ENCODE measurements at regions of chr11 and their contacts with region 1.

Region 1: GRCh38 chr11:75802913-75803820 is 11.8 kb upstream of the UVRAG start:
- DNase-seq: peak; percentile 79
- H3K4me3 Mint-ChIP-seq: no peak overlapping the region
- H3K27ac Mint-ChIP-seq: no peak overlapping the region
- H3K4me1 Mint-ChIP-seq: no peaks in the 10 kb centered on the region
- H3K27me3 Mint-ChIP-seq: no peaks in the 10 kb centered on the region
- CTCF ChIP-seq: peak; percentile 83

Region 2: GRCh38 chr11:75721855-75722668 is 81.1 kb before region 1 on chr11:
- CTCF ChIA-PET with region 1: interaction called, 4 read pairs
- intact Hi-C with region 1: loop called (anchors 5 kb)
- DNase-seq: no peak
- H3K4me3 Mint-ChIP-seq: no peak overlapping the region
- H3K27ac Mint-ChIP-seq: no peak overlapping the region
- H3K4me1 Mint-ChIP-seq: peaks cover 4% of the 10 kb centered on the region
- H3K27me3 Mint-ChIP-seq: peaks cover 8% of the 10 kb centered on the region
- CTCF ChIP-seq: no peak

Region 3: GRCh38 chr11:75777461-75778110 is 25.6 kb before region 1 on chr11:
- CTCF ChIA-PET with region 1: interaction called, 16 read pairs
- intact Hi-C with region 1: no loop called
- DNase-seq: no peak
- H3K4me3 Mint-ChIP-seq: no peak overlapping the region
- H3K27ac Mint-ChIP-seq: no peak overlapping the region
- H3K4me1 Mint-ChIP-seq: peaks cover 19% of the 10 kb centered on the region
- H3K27me3 Mint-ChIP-seq: no peaks in the 10 kb centered on the region
- CTCF ChIP-seq: no peak